ENCODE measurements at regions of chr19 and their contacts with region 1.

Region 1: GRCh38 chr19:42176990-42177685 is 40.3 kb downstream of the DEDD2 start:
- DNase-seq: peak; percentile 71
- ATAC-seq: peak; percentile 91
- H3K4me3 Mint-ChIP-seq: no peak overlapping the region
- H3K27ac Mint-ChIP-seq: no peak overlapping the region
- H3K4me1 Mint-ChIP-seq: peaks cover 15% of the 10 kb centered on the region
- H3K27me3 Mint-ChIP-seq: peaks cover 20% of the 10 kb centered on the region
- CTCF ChIP-seq: no peak

Region 2: GRCh38 chr19:42108527-42109389 is 68.4 kb before region 1 on chr19:
- CTCF ChIA-PET with region 1: interaction called, 20 read pairs
- POLR2A ChIA-PET with region 1: interaction called, 10 read pairs
- intact Hi-C with region 1: loop called (anchors 1 kb)
- DNase-seq: peak; percentile 76
- ATAC-seq: peak; percentile 92
- H3K4me3 Mint-ChIP-seq: peak overlapping the region; percentile 47
- H3K27ac Mint-ChIP-seq: peak overlapping the region; percentile 81
- H3K4me1 Mint-ChIP-seq: peaks cover 69% of the 10 kb centered on the region
- H3K27me3 Mint-ChIP-seq: no peaks in the 10 kb centered on the region
- CTCF ChIP-seq: peak; percentile 99

Region 3: GRCh38 chr19:42199440-42200115 is 22.4 kb after region 1 on chr19:
- CTCF ChIA-PET with region 1: interaction called, 7 read pairs
- POLR2A ChIA-PET with region 1: interaction called, 3 read pairs
- intact Hi-C with region 1: loop called (anchors 2 kb)
- DNase-seq: peak; percentile 47
- ATAC-seq: peak; percentile 44
- H3K4me3 Mint-ChIP-seq: peak overlapping the region; percentile 68
- H3K27ac Mint-ChIP-seq: peak overlapping the region; percentile 93
- H3K4me1 Mint-ChIP-seq: peaks cover 87% of the 10 kb centered on the region
- H3K27me3 Mint-ChIP-seq: no peaks in the 10 kb centered on the region
- CTCF ChIP-seq: no peak